Naive thymus-derived CD4-positive, alpha-beta T cell (primary cell): ENCODE measurements at regions of chr4 and their contacts with region 1.

Region 1: GRCh38 chr4:185471235-185472102 is at the start of gene CCDC110:
- DNase-seq: peak; percentile 72 to 89 (median 86)
- ATAC-seq: peak; percentile 99
- H3K4me3 ChIP-seq: peak within 1 kb of the TSS; percentile 61
- H3K4me3 Mint-ChIP-seq: peak within 1 kb of the TSS; percentile 87 to 98 (median 92)
- H3K27ac ChIP-seq: peak within 1 kb of the TSS; percentile 65
- H3K27ac Mint-ChIP-seq: peak within 1 kb of the TSS; percentile 5 to 90 (median 86)
- H3K4me1 ChIP-seq: peaks cover 0 to 3% of the 10 kb centered on the region in 2 donors
- H3K4me1 Mint-ChIP-seq: peaks cover 5 to 18% (median 9%) of the 10 kb centered on the region in 7 donors
- H3K27me3 ChIP-seq: no peaks in the 10 kb centered on the region
- H3K27me3 Mint-ChIP-seq: peaks cover 0 to 52% (median 6%) of the 10 kb centered on the region in 5 donors
- total RNA-seq, gene CCDC110: 0.42 to 1.8 (median 0.76) TPM in 4 of 5 experiments, not detected in the other

Region 2: DNA sequence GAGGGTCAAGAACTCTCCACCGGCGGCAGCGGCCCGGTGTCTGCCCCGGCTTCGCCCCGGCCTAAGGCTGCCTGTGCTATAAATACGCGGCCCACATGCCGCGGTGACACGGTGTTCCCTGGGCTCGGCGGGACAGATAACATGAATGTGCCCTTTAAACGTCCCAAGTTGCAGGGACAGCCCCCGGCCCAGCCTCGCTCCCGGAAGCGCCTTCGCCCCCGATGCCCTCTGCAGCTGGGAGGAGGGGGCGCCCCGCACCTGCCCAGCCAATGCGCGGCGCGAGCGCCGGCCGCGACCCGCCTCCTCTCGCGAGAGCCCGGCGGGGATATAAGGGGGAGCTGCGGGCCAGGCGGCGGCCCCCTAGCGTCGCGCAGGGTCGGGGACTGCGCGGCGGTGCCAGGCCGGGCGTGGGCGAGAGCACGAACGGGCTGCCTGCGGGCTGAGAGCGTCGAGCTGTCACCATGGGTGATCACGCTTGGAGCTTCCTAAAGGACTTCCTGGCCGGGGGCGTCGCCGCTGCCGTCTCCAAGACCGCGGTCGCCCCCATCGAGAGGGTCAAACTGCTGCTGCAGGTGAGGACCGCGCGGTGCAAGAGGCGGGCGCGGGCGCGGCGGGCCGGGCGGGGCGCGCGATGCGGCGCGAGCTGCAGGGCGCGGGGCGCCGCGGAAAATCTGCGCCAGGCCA is 328.4 kb before region 1 on chr4 and contains the start of gene SLC25A4:
- CTCF ChIA-PET with region 1: no interaction called
- POLR2A ChIA-PET with region 1: no interaction called
- intact Hi-C with region 1: loop called in 1 of 2 experiments (anchors 5 kb)
- DNase-seq: peak; percentile 68 to 81 (median 75)
- ATAC-seq: peak; percentile 95
- H3K4me3 ChIP-seq: peak within 1 kb of the TSS; percentile 57
- H3K4me3 Mint-ChIP-seq: peak within 1 kb of the TSS; percentile 84 to 95 (median 90)
- H3K27ac ChIP-seq: peak within 1 kb of the TSS; percentile 52
- H3K27ac Mint-ChIP-seq: peak within 1 kb of the TSS in 7 of 9 donors; percentile 4 to 89 (median 83)
- H3K4me1 ChIP-seq: peaks cover 4 to 13% of the 10 kb centered on the region in 2 donors
- H3K4me1 Mint-ChIP-seq: peaks cover 11 to 15% (median 12%) of the 10 kb centered on the region in 7 donors
- H3K27me3 ChIP-seq: peaks cover 0 to 3% of the 10 kb centered on the region in 2 donors
- H3K27me3 Mint-ChIP-seq: peaks cover 15 to 69% (median 26%) of the 10 kb centered on the region in 5 donors
- total RNA-seq, gene SLC25A4: 0.60 to 7.2 (median 4.9) TPM

Region 3: DNA sequence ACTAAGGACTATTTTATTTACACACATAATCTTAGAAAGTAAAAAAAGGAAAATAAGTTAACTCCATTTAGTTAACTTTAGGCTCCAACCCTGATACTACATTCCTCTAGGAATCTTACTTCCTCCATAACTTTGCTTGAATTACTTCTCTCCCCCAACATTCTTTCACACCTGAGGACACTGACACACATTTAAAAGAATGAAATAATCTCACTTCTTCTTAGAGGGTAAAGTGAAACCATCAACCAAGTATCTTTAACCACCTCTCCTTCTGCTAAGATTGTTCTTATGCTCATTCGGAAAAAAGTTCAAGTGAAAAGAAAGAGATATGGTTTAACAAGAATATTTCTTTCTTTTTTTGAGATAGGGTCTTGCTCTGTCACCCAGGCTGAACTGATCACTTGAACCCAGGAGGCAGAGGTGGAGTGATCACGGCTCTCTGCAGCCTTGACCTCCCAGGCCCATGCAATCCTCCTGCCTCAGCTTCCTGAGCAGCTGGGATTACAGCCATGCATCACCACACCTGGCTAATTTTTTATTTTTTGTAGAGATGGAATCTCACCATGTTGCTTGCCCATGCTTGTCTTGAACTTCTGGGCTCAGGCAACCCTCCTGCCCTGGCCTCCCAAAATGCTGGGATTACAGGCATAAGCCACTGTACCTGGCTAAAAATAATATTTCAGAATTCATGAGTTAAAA is 299.9 kb before region 1 on chr4:
- CTCF ChIA-PET with region 1: no interaction called
- POLR2A ChIA-PET with region 1: no interaction called
- intact Hi-C with region 1: no loop called
- DNase-seq: no peak
- ATAC-seq: no peak
- H3K4me3 ChIP-seq: no peak overlapping the region
- H3K4me3 Mint-ChIP-seq: no peak overlapping the region
- H3K27ac ChIP-seq: no peak overlapping the region
- H3K27ac Mint-ChIP-seq: no peak overlapping the region
- H3K4me1 ChIP-seq: peaks cover under 1 to 3% of the 10 kb centered on the region in 2 donors
- H3K4me1 Mint-ChIP-seq: peaks cover 3 to 14% (median 6%) of the 10 kb centered on the region in 7 donors
- H3K27me3 ChIP-seq: no peaks in the 10 kb centered on the region
- H3K27me3 Mint-ChIP-seq: peaks cover 0 to 10% (median 5%) of the 10 kb centered on the region in 5 donors

Region 4: GRCh38 chr4:185343726-185344581 is 127.5 kb before region 1 on chr4:
- CTCF ChIA-PET with region 1: no interaction called
- POLR2A ChIA-PET with region 1: no interaction called
- intact Hi-C with region 1: no loop called
- DNase-seq: no peak
- ATAC-seq: no peak
- H3K4me3 ChIP-seq: no peak overlapping the region
- H3K4me3 Mint-ChIP-seq: peak overlapping the region in 3 of 10 donors; percentile 9 to 55 (median 28)
- H3K27ac ChIP-seq: no peak overlapping the region
- H3K27ac Mint-ChIP-seq: peak overlapping the region in 7 of 9 donors; percentile 42 to 85 (median 59)
- H3K4me1 ChIP-seq: peaks cover 3 to 13% of the 10 kb centered on the region in 2 donors
- H3K4me1 Mint-ChIP-seq: peaks cover 11 to 58% (median 28%) of the 10 kb centered on the region in 7 donors
- H3K27me3 ChIP-seq: no peaks in the 10 kb centered on the region
- H3K27me3 Mint-ChIP-seq: no peaks in the 10 kb centered on the region

Region 5: GRCh38 chr4:185395956-185396723 is 75.3 kb before region 1 on chr4:
- CTCF ChIA-PET with region 1: no interaction called
- POLR2A ChIA-PET with region 1: interaction called, 5 read pairs
- intact Hi-C with region 1: loop called (anchors 1 kb)
- DNase-seq: peak; percentile 93 to 100 (median 97)
- ATAC-seq: peak; percentile 97
- H3K4me3 ChIP-seq: peak overlapping the region; percentile 69
- H3K4me3 Mint-ChIP-seq: peak overlapping the region; percentile 82 to 100 (median 97)
- H3K27ac ChIP-seq: peak overlapping the region; percentile 97
- H3K27ac Mint-ChIP-seq: peak overlapping the region; percentile 90 to 100 (median 99)
- H3K4me1 ChIP-seq: peaks cover 12 to 15% of the 10 kb centered on the region in 2 donors
- H3K4me1 Mint-ChIP-seq: peaks cover 14 to 57% (median 27%) of the 10 kb centered on the region in 7 donors
- H3K27me3 ChIP-seq: no peaks in the 10 kb centered on the region
- H3K27me3 Mint-ChIP-seq: no peaks in the 10 kb centered on the region

Region 6: GRCh38 chr4:185416955-185417354 is 54.5 kb before region 1 on chr4:
- CTCF ChIA-PET with region 1: no interaction called
- POLR2A ChIA-PET with region 1: no interaction called
- intact Hi-C with region 1: no loop called
- DNase-seq: no peak
- ATAC-seq: no peak
- H3K4me3 ChIP-seq: no peak overlapping the region
- H3K4me3 Mint-ChIP-seq: no peak overlapping the region
- H3K27ac ChIP-seq: no peak overlapping the region
- H3K27ac Mint-ChIP-seq: peak overlapping the region in 1 of 9 donors; percentile 6
- H3K4me1 ChIP-seq: no peaks in the 10 kb centered on the region
- H3K4me1 Mint-ChIP-seq: peaks cover 3 to 22% (median 13%) of the 10 kb centered on the region in 7 donors
- H3K27me3 ChIP-seq: no peaks in the 10 kb centered on the region
- H3K27me3 Mint-ChIP-seq: no peaks in the 10 kb centered on the region

Region 7: GRCh38 chr4:185597532-185598188 is 126.2 kb after region 1 on chr4:
- CTCF ChIA-PET with region 1: no interaction called
- POLR2A ChIA-PET with region 1: no interaction called
- intact Hi-C with region 1: loop called (anchors 1 kb)
- DNase-seq: peak; percentile 42 to 60 (median 56)
- ATAC-seq: peak; percentile 87
- H3K4me3 ChIP-seq: no peak overlapping the region
- H3K4me3 Mint-ChIP-seq: no peak overlapping the region
- H3K27ac ChIP-seq: no peak overlapping the region
- H3K27ac Mint-ChIP-seq: no peak overlapping the region
- H3K4me1 ChIP-seq: no peaks in the 10 kb centered on the region
- H3K4me1 Mint-ChIP-seq: peaks cover 0 to 4% (median 0%) of the 10 kb centered on the region in 7 donors
- H3K27me3 ChIP-seq: peaks cover 4 to 5% of the 10 kb centered on the region in 2 donors
- H3K27me3 Mint-ChIP-seq: peaks cover 18 to 33% (median 25%) of the 10 kb centered on the region in 5 donors